ENCODE measurements at regions of chr17 and their contacts with region 1.

Region 1: DNA sequence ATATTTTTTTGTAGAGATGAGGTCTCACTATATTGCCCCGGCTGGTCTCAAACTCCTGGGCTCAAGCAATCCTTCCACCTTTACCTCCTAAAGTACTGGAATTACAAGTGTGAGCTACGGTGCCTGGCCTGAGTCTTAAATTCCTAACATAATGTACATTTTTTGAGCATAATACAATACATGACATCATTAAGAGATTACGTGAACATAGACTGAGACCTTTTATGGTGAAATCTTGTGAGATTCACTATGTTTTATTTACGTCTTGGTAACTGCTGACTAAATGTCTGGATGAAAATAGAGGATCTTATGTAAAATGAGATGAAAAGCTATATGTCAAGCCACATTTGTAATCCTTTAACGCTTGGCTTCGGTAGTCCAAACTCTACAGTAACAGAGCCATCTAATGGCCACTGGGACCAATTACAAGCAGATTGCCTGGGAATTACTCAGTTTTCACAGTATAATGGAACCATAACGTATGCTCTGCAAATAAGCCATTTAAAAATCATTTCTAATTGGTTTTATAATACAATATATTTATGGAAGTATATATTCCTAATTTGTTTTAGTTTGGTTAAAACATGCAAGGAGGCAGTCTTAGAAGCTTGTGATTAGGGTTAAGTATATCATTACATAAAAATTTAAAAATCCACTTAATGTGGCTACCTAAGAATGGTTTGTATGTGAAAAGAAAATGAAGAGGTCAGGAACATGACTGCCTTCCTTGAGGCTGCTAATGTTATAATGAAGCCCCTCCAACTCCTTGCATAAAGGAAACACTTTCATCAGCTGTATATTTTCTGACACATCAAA is 8.1 kb upstream of the EFCAB13 start:
- H3K4me3 ChIP-seq: no peak overlapping the region
- H3K27ac ChIP-seq: no peak overlapping the region
- H3K4me1 ChIP-seq: no peaks in the 10 kb centered on the region
- CTCF ChIP-seq: peak; percentile 47; the same call in 1 of the 2 replicates

Region 2: DNA sequence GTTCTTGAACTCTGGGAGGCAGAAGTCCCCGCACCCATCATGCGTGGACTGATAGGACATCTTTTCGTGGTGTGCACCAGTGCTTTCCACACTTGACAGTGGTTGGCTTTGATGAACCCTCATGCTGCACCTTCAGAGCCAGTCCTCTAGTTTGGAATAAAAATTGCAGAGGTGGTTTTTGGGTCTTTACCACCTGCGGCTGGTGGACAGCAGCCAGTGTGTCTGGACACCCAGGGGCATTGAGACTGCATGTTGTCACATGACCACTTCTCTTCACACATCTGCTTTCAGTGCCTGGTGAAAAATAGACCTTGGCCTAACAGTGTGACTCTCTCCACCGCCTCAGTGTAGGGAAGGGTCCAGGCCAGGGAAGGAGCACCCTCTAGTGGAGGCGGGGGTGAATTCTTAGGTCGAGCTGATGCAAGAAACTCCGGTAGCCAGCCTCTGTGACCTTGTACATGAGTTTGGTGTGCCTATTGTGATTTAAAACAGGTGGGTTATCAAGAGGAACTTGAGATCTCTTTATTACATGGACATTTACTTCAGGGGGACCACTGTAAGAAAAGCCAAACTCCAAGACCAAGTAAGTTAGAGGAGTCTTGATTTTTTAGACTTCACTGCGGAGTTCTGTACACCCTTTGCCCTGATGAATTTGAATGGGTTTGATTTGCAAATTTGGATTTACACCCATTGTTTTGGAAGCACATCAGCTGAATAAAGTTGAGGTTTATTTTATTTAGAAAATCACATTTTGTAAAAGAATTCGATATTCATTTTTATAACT is 374.8 kb before region 1 on chr17:
- CTCF ChIA-PET with region 1: interaction called, 12 read pairs
- POLR2A ChIA-PET with region 1: no interaction called
- H3K4me3 ChIP-seq: no peak overlapping the region
- H3K27ac ChIP-seq: no peak overlapping the region
- H3K4me1 ChIP-seq: no peaks in the 10 kb centered on the region
- CTCF ChIP-seq: peak; percentile 78

Region 3: DNA sequence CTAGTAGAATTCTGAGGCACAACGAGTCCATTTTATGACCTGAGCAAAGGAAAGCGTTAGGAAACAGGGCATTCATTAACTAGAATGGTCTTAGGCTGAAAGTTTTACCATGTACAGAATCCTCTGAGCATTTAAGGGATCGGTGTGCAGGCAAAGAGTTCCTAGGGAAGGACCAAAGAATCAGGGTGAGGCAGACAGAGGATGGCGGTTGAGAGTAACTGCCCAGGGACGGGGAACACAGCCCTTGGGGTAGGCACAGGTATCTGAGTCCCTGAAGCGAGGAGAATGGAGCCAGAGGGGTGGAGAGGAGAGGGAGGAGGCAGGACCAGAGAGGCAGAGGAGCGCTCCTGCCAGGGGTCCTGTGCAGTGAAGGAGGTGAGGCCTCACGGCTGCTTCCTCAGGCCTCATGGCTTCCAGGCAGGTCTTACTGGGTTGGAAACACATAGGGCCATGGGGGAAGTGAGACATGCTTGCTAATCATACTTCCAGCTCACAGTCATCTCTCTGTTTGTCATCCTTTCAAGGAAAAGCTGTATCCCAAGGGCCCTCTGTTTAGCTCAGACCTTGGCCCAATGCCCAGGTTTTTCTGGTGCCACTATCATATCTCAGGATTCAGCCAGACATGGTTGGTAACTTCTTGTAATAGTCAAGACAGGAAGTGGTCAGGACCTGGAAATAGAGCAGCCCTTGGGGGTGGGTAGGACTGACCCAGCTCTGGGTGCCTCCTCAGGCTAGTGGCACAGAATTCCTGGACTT is 75.9 kb before region 1 on chr17:
- CTCF ChIA-PET with region 1: interaction called, 164 read pairs
- POLR2A ChIA-PET with region 1: interaction called, 5 read pairs
- H3K4me3 ChIP-seq: no peak overlapping the region
- H3K27ac ChIP-seq: peak overlapping the region; percentile 58
- H3K4me1 ChIP-seq: peaks cover 11% of the 10 kb centered on the region
- CTCF ChIP-seq: no peak

Region 4: DNA sequence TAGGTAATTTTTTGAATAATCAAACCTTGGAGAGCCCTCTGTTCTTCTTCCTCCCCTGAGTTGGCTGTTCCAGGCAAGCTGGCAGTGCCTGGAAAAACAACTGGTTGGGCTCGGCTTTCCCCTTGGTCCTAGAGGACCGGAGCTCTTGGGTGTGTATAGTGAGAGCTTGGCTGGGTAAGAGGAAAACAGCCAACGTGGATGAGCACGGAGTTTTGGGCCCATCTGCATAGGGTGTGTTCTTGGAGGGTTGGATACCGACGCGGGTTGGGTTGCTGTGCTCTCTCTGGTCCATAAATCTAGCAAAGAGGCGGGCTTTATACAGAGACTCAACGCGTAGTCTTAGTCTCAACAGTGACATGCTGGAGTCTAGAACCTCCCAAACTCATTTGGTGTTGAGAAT is 38.8 kb before region 1 on chr17:
- CTCF ChIA-PET with region 1: interaction called, 12 read pairs
- POLR2A ChIA-PET with region 1: interaction called, 11 read pairs
- H3K4me3 ChIP-seq: no peak overlapping the region
- H3K27ac ChIP-seq: peak overlapping the region; percentile 61; the same call in 1 of the 2 replicates
- H3K4me1 ChIP-seq: peaks cover 33% of the 10 kb centered on the region
- CTCF ChIP-seq: no peak

Region 5: DNA sequence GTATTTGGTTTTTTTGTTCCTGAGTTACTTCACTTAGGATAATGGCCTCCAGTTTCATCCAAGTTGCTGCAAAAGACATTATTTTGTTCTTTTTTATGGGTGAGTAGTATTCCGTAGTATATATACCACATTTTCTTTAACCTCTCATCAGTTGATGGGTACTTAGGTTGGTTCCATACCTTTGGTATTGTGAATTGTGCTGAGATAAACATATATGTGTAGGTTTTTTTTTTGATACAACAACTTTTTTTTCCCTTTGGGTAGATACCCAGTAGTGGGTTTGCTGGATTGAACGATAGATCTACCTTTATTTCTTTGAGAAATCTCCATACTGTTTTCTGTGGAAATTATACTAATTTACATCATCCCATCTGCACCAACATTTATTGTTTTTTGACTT is 14.9 kb after region 1 on chr17:
- CTCF ChIA-PET with region 1: interaction called, 14 read pairs
- POLR2A ChIA-PET with region 1: no interaction called
- H3K4me3 ChIP-seq: no peak overlapping the region
- H3K27ac ChIP-seq: no peak overlapping the region
- H3K4me1 ChIP-seq: no peaks in the 10 kb centered on the region
- CTCF ChIP-seq: no peak

Region 6: DNA sequence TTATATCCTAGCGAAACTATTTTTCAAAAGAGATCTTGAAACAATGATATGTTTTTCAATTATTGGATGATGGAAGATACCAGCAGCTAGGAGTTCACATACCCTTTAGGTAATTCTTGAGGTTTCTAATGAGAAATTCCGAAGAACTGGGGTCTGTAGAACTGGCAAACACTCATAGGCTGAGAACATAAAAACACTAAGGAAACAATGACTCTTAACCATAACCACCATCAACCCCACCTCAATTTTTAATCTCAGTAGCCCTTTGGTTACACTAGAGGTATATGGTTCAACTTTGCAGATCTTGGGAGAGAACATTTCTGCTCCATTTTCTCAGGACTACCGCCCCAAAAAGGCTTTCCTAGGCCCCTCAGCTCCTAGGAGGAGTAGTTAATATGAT is 149.5 kb after region 1 on chr17:
- CTCF ChIA-PET with region 1: no interaction called
- POLR2A ChIA-PET with region 1: no interaction called
- H3K4me3 ChIP-seq: no peak overlapping the region
- H3K27ac ChIP-seq: no peak overlapping the region
- H3K4me1 ChIP-seq: no peaks in the 10 kb centered on the region
- CTCF ChIP-seq: no peak